Activated CD8-positive, alpha-beta memory T cell treated with anti-CD3 and anti-CD28 coated beads, Interleukin-2, amount 10 ng/mL, durations not matched to agents 7 days and 5 days (primary cell): ENCODE measurements at regions of chr1 and their contacts with region 1.

Region 1: DNA sequence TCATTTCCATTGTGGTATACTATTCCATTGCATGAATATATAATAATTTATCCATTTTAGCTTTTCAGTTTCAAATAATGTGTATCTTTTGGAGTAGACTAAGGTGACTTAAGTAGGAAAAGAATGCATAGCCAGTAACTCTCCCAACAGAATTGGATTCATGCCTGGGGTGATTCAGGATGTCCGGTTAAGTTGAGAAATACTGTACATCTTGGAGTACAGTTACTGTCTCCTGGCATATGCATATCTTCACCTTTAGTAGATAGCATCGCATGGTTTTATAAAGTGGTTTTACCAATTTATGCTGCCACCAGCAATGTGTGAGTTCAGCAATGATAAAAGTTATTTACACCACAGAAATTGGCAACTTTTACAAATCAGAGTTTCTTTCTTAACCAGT is 18.6 kb upstream of the SLC6A9 start:
- DNase-seq: no peak
- ATAC-seq: no peak
- H3K4me3 Mint-ChIP-seq: no peak overlapping the region
- H3K27ac Mint-ChIP-seq: no peak overlapping the region
- H3K4me1 Mint-ChIP-seq: peaks cover 13% of the 10 kb centered on the region
- H3K27me3 Mint-ChIP-seq: peaks cover 15% of the 10 kb centered on the region

Region 2: DNA sequence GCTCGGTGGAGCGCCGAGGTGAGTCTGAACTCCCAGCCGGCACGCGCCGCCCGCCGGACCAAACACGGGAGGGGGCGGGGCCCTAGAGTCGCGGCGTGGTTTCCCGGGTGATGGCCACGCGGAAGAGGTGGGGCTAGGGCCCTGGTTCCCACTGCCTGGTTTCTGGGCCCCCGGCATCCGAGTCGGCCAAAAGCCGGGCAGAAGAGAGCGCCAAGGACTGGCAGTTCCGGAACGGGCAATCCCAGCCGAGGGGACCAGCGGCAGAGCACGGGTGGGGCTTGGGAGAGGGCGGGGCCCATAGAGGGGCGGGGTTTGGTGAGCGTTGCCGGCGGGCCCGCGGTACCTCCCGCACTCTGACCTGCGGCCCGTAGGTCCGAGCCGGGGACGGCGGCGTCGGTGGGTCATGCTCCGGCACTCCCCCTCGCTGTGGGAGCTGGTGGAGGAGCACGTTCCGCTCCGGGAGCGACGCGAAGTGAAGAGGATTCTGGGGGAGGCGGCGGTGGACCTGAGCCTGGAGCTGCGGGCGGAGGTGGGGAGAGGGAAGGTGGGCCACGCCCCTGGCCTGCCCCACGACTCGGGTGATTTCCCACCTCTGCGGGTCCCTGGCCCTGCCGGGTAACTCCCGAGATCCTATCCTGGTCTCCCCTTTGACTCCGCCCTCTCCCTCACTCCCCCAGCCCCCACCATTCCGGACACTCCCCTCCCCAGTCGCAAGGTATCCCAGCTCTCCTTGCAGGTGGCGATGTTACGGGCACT is 58.2 kb before region 1 on chr1 and contains the start of gene CCDC24:
- CTCF ChIA-PET with region 1: interaction called, 12 read pairs
- DNase-seq: peak; percentile 83
- ATAC-seq: peak; percentile 86
- H3K4me3 Mint-ChIP-seq: peak within 1 kb of the TSS; percentile 83
- H3K27ac Mint-ChIP-seq: peak within 1 kb of the TSS; percentile 82
- H3K4me1 Mint-ChIP-seq: peaks cover 16% of the 10 kb centered on the region
- H3K27me3 Mint-ChIP-seq: no peaks in the 10 kb centered on the region
- total RNA-seq, gene CCDC24: 1.3 to 1.5 TPM

Region 3: DNA sequence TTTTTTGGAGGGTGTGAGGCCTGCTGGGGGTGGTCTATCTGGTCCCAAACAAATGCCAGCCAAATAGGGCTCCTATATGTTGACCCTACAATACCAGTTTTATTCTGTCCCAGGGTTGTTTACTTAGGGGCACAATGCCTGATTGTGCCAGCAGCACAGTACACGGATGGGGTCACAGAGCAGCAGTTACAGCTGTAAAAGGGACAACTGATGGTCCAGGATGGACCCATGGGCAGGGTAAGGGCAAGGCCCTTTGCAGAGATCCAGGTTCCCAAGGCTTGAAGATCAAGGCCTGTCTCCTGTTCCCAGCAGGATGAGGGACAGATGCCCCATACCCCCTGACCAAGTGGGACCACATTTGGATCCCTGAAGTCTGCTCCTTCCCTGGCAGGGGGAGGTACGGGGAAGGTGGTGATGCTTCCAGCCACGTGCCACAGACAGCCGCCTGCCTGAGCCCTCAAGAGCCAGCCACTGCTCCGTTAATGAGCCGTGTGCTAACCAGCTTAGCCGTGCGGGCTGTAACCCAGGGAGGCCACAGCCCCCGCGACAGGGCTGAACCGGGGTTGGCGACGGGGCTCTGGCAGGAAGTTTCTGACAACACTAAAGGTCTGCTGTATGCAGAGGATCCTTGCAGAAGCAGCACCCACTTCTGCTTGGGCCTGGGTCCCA is 36.8 kb before region 1 on chr1:
- CTCF ChIA-PET with region 1: interaction called, 60 read pairs
- DNase-seq: no peak
- ATAC-seq: no peak
- H3K4me3 Mint-ChIP-seq: no peak overlapping the region
- H3K27ac Mint-ChIP-seq: no peak overlapping the region
- H3K4me1 Mint-ChIP-seq: peaks cover 4% of the 10 kb centered on the region
- H3K27me3 Mint-ChIP-seq: no peaks in the 10 kb centered on the region

Region 4: GRCh38 chr1:44029906-44030604 is 19.8 kb before region 1 on chr1:
- CTCF ChIA-PET with region 1: interaction called, 33 read pairs
- DNase-seq: peak; percentile 94
- ATAC-seq: peak; percentile 86
- H3K4me3 Mint-ChIP-seq: peak overlapping the region; percentile 89
- H3K27ac Mint-ChIP-seq: peak overlapping the region; percentile 96
- H3K4me1 Mint-ChIP-seq: peaks cover 20% of the 10 kb centered on the region
- H3K27me3 Mint-ChIP-seq: no peaks in the 10 kb centered on the region

Region 5: DNA sequence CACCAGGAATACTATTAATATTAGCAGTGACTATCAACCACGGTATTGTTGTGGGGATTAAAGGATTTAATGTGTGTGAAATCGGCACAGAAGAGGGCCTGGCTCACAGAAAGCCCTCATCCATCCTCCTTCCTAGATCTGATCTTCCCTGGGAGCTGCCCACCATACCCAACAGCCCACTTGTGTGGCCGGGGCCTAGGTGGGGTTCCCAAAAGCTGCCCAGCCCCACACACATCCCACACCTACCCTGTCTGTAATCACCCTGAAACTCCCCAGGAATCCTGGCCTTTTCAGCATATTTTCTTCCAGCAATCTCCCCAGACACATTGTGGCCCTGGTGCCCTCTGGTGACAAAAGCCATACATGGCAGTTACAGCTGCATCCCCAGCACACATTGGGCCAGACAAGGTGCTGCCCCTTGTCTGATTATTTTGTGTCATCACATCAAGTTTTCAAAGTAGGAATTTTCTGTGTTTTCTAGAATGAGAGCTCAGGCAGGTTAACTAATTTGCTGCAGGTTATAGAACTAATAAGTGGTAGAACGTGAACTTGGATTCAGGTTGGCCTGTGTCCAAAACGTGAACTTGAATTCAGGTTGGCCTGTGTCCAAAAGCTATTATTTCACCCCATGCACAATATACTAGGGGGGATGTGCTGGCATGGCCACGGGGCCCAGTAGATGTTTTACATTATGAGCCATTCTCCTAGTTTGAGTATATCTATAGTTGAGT is 13.3 kb before region 1 on chr1:
- CTCF ChIA-PET with region 1: interaction called, 33 read pairs
- DNase-seq: peak; percentile 77
- ATAC-seq: peak; percentile 72
- H3K4me3 Mint-ChIP-seq: no peak overlapping the region
- H3K27ac Mint-ChIP-seq: no peak overlapping the region
- H3K4me1 Mint-ChIP-seq: peaks cover 7% of the 10 kb centered on the region
- H3K27me3 Mint-ChIP-seq: peaks cover 7% of the 10 kb centered on the region

Region 6: DNA sequence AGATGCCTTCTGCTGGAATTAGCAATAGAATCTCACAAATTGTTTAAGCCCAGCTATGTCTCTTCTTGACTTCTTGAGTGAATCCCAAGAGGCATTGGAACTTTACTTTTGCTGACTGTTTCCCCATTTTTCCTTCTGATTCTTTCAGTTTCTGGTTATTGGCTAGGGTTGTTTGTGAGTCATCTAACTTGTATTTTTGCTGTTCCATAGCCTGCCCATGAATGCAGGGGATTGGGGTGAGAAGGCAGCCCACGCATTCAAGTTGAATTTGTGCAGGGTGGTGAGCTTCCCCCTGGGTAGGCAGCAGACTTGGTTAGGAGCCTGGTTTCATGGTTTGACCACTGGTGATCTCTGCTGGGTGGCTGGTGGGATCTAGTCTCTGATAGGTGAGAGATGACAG is 58.4 kb after region 1 on chr1:
- CTCF ChIA-PET with region 1: no interaction called
- DNase-seq: no peak
- ATAC-seq: no peak
- H3K4me3 Mint-ChIP-seq: no peak overlapping the region
- H3K27ac Mint-ChIP-seq: no peak overlapping the region
- H3K4me1 Mint-ChIP-seq: no peaks in the 10 kb centered on the region
- H3K27me3 Mint-ChIP-seq: peaks cover 22% of the 10 kb centered on the region